ENCODE measurements at regions of chr3 and their contacts with region 1.

Region 1: GRCh38 chr3:183895296-183895695 is 10.6 kb upstream of the PARL start:
- DNase-seq: peak in 1 of 10 donors; percentile 24
- H3K4me3 ChIP-seq: peak overlapping the region in 1 of 59 donors; percentile 29
- H3K27ac ChIP-seq: no peak overlapping the region
- H3K27me3 ChIP-seq: no peaks in the 10 kb centered on the region
- CTCF ChIP-seq: peak; percentile 62 to 93 (median 82)

Region 2: DNA sequence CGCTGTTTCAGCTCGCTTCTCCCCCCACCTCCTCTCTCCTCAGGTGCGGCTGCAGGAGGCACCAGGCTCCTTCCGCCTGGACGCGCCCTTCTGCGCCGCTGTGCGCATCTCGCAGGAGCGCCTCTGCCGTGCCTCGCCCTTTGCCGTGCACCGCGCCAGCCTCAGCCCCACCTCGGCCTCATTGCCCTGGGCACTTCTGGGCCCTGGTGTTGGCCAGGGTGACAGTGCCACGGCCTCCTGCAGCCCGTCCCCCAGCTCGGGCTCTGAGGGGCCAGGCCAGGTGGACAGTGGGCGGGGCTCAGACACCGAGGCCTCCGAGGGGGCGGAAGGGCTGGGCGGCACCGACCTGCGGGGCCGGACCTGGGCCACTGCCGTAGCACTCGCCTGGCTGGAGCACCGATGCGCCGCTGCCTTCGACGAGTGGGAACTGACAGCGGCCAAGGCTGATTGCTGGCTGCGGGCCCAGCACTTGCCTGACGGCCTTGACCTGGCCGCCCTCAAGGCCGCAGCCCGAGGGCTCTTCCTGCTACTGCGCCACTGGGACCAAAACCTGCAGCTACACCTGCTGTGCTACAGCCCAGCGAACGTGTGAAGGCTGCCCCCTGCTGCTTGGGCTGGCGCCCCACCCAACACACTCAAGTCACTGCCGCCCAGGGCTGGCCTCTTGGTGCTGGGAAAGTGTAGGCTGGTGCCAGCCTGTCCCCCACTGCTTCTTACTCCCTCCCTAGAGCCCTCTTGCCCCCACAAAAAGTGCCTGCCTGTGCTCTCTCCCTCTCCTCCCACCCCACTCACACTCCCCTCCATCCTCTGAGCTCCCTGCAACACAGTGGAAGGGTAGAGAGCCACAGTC is 346.4 kb after region 1 on chr3:
- intact Hi-C with region 1: loop called in 1 of 2 experiments (anchors 5 kb)
- DNase-seq: no peak
- H3K4me3 ChIP-seq: no peak overlapping the region
- H3K27ac ChIP-seq: peak overlapping the region in 5 of 59 donors; percentile 0 to 47 (median 12)
- H3K27me3 ChIP-seq: no peaks in the 10 kb centered on the region
- CTCF ChIP-seq: peak in 23 of 56 donors; percentile 5 to 44 (median 21)

Region 3: DNA sequence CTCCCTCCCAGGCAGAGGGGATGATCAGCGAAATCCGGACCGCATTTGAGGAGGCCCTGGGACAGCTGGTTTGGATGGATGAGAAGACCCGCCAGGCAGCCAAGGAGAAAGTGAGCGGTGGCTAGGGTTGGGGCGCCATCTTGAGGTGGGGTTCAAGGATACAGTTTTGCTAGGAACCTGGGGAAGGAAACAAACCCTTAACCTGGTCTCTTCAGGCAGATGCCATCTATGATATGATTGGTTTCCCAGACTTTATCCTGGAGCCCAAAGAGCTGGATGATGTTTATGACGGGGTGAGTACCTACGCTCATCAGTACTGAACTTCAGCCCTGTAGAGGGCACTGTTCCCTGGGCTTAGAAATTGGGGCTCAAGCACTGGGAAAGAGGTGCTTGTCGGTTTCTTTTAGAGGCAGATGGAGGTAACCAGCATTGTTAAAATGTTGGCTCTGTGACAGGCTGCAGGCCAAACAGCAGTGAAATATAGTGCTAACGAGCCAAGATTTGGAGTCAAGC is 394.2 kb after region 1 on chr3:
- intact Hi-C with region 1: loop called (anchors 2 to 10 kb)
- DNase-seq: peak in 8 of 10 donors; percentile 23 to 66 (median 52)
- H3K4me3 ChIP-seq: no peak overlapping the region
- H3K27ac ChIP-seq: no peak overlapping the region
- H3K27me3 ChIP-seq: no peaks in the 10 kb centered on the region
- CTCF ChIP-seq: peak in 54 of 56 donors; percentile 35 to 77 (median 63)

Measured in dorsolateral prefrontal cortex (tissue), 120 donors.